CD14-positive monocyte (primary cell): ENCODE measurements at regions of chr21 and their contacts with region 1.

Region 1: DNA sequence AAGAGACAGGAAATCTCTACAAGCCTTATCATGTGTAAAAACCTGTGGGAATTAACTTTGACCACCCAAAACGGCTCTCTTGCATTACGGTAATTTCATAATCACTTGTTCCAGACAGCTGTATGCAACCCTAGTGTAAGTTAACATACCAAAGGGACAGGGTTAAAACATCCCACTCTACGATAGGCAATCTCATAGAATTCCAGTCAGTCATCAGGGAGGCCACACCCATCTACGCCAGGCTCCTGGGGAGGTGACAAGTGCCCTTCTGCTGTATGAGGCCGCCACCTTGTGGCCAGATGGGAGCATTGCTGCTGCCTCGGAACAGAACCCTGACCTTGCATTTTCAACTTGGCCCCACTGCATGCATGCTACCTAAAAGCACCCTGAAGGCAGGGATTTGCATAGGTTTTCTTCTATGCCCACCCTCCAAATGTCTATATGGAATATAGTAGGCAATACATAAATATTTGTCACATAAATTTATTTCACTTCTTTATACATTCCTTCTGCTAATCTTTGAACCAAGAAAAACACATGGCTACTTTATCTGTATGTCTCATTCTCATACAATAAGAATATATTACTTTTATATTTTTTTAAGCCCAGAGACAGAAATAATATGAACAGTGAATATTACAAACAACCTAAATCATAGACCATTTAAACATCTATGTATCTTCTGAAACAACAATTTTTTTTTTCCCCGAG is 12.6 kb downstream of the HSF2BP start:
- DNase-seq: peak; percentile 82 to 89 (median 85)
- H3K4me3 ChIP-seq: no peak overlapping the region
- H3K4me3 Mint-ChIP-seq: peak overlapping the region in 1 of 2 donors; percentile 28
- H3K27ac ChIP-seq: no peak overlapping the region
- H3K27ac Mint-ChIP-seq: peak overlapping the region in 5 of 7 donors; percentile 70 to 88 (median 77)
- H3K4me1 ChIP-seq: peaks cover 14 to 17% of the 10 kb centered on the region in 2 donors
- H3K4me1 Mint-ChIP-seq: peaks cover 20% of the 10 kb centered on the region
- H3K27me3 ChIP-seq: no peaks in the 10 kb centered on the region
- H3K27me3 Mint-ChIP-seq: peaks cover 1 to 4% (median 3%) of the 10 kb centered on the region in 3 donors
- CTCF ChIP-seq: peak; percentile 98

Region 2: DNA sequence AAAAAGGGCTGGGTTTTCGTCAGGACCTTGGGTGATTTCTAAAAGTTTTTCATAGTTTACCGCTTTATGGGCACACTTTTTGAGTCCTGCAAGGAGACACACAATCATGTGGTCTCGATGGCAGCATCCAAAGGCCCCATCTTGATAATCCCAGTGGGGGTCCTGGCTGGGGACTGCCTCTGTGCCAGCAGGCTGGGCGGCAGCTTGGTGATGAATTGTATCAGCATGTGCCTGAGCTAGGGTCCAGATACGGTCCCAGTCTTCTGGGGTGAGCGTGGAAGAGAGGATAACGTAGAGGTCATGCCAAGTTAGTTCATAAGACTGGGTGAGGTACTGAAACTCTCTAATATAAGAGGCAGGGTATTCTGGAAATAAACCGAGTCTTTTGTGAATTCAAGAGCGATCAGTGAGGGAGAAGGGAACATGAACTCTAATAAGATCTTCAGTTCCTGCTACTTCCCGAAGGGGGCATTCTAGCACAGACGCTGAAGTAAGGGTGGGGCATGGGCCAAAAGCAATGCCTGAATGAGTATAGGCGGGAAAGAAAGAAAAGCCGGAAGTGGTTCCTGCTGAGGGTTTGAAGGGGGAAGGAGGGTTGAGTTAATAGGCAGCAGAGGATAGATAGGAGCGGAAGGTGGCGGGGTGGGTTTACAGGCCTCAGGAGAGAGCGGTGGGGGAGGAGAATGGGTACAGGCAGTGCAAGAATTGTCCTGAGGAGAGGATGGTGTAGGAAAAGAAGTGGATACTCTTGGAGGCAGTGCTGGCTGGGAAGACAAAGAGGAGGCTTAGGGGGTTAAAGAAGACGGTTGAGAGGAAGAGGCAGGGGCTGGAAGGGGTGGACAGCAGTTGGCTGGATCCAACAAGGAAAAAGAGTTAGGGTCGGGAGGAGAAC is 722.9 kb before region 1 on chr21:
- intact Hi-C with region 1: loop called in 1 of 2 experiments (anchors 10 kb)
- DNase-seq: peak; percentile 40 to 63 (median 62)
- H3K4me3 ChIP-seq: no peak overlapping the region
- H3K4me3 Mint-ChIP-seq: peak overlapping the region; percentile 47 to 74
- H3K27ac ChIP-seq: no peak overlapping the region
- H3K27ac Mint-ChIP-seq: peak overlapping the region in 1 of 7 donors; percentile 4
- H3K4me1 ChIP-seq: peaks cover 7 to 9% of the 10 kb centered on the region in 2 donors
- H3K4me1 Mint-ChIP-seq: peaks cover 13% of the 10 kb centered on the region
- H3K27me3 ChIP-seq: no peaks in the 10 kb centered on the region
- H3K27me3 Mint-ChIP-seq: no peaks in the 10 kb centered on the region
- CTCF ChIP-seq: peak; percentile 70

Region 3: GRCh38 chr21:43352568-43353281 is 294.0 kb before region 1 on chr21:
- intact Hi-C with region 1: loop called in 1 of 2 experiments (anchors 10 kb)
- DNase-seq: peak; percentile 57 to 82 (median 61)
- H3K4me3 ChIP-seq: no peak overlapping the region
- H3K4me3 Mint-ChIP-seq: no peak overlapping the region
- H3K27ac ChIP-seq: peak overlapping the region in 1 of 2 donors; percentile 26
- H3K27ac Mint-ChIP-seq: peak overlapping the region in 5 of 7 donors; percentile 51 to 84 (median 75)
- H3K4me1 ChIP-seq: peaks cover 9 to 13% of the 10 kb centered on the region in 2 donors
- H3K4me1 Mint-ChIP-seq: peaks cover 20% of the 10 kb centered on the region
- H3K27me3 ChIP-seq: no peaks in the 10 kb centered on the region
- H3K27me3 Mint-ChIP-seq: peaks cover 0 to 3% (median 0%) of the 10 kb centered on the region in 3 donors
- CTCF ChIP-seq: no peak

Region 4: GRCh38 chr21:43369124-43369523 is 277.6 kb before region 1 on chr21:
- intact Hi-C with region 1: no loop called
- DNase-seq: peak; percentile 49 to 81 (median 57)
- H3K4me3 ChIP-seq: no peak overlapping the region
- H3K4me3 Mint-ChIP-seq: no peak overlapping the region
- H3K27ac ChIP-seq: no peak overlapping the region
- H3K27ac Mint-ChIP-seq: peak overlapping the region in 1 of 7 donors; percentile 43
- H3K4me1 ChIP-seq: no peaks in the 10 kb centered on the region
- H3K4me1 Mint-ChIP-seq: peaks cover 5% of the 10 kb centered on the region
- H3K27me3 ChIP-seq: no peaks in the 10 kb centered on the region
- H3K27me3 Mint-ChIP-seq: peaks cover 0 to 8% (median 2%) of the 10 kb centered on the region in 3 donors
- CTCF ChIP-seq: no peak

Region 5: DNA sequence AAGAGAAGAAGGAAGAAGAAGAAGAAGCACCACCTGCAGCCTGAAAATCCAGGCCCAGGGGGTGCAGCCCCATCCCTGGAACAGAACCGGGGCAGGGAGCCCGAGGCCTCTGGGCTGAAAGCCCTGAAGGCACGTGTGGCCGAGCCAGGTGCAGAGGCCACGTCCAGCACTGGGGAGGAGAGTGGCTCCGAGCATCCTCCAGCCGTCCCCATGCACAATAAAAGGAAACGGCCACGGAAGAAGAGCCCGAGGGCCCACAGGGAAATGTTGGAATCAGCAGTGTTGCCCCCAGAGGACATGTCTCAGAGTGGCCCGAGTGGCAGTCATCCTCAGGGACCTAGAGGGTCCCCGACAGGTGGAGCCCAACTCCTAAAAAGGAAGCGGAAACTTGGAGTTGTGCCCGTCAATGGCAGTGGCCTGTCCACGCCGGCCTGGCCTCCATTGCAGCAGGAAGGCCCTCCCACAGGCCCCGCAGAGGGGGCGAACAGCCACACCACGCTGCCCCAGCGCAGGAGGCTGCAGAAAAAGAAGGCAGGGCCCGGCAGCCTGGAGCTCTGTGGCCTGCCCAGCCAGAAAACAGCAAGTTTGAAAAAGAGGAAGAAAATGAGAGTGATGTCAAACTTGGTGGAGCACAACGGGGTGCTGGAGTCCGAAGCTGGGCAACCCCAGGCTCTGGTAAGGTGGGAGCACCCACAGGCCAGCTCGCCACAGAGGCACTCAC is 41.0 kb after region 1 on chr21:
- intact Hi-C with region 1: no loop called
- DNase-seq: no peak
- H3K4me3 ChIP-seq: no peak overlapping the region
- H3K4me3 Mint-ChIP-seq: no peak overlapping the region
- H3K27ac ChIP-seq: peak overlapping the region in 1 of 2 donors; percentile 52
- H3K27ac Mint-ChIP-seq: peak overlapping the region in 3 of 7 donors; percentile 47 to 61 (median 53)
- H3K4me1 ChIP-seq: peaks cover 9 to 14% of the 10 kb centered on the region in 2 donors
- H3K4me1 Mint-ChIP-seq: peaks cover 19% of the 10 kb centered on the region
- H3K27me3 ChIP-seq: no peaks in the 10 kb centered on the region
- H3K27me3 Mint-ChIP-seq: peaks cover 0 to under 1% (median 0%) of the 10 kb centered on the region in 3 donors
- CTCF ChIP-seq: no peak